ENCODE measurements at regions of chr12 and their contacts with region 1.

Region 1: DNA sequence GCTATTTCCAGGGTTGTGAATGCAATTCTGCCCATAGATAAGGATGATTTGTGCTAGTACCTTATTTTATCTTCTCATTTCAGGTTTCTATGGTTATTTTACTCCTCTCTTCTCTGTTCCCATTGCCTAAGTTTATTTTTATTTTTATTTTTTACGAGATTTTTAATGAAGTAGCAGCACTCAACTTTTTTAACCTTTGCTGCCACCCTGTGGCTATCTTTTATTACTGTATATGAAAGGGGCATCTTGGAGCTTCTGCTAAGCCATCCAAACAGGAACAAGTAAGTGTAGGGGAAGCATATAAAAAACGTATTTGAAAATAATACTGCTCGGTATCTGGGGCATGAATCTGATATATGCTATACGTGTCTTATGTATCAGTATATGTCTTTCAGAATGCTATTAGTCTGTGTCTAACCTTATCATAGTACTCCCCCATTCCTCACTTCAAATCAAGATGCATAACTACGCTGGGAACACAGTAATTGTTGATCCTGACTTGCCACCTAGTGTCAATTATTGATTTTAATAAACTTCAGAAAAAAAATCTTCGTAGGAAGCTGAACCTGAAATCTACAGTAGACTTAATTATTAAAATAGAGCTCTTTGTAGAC is 60.3 kb downstream of the KLRG1 start:
- DNase-seq: no peak
- H3K4me3 Mint-ChIP-seq: no peak overlapping the region
- H3K27ac Mint-ChIP-seq: no peak overlapping the region
- H3K4me1 Mint-ChIP-seq: peaks cover 9% of the 10 kb centered on the region
- H3K27me3 Mint-ChIP-seq: peaks cover 24% of the 10 kb centered on the region

Region 2: DNA sequence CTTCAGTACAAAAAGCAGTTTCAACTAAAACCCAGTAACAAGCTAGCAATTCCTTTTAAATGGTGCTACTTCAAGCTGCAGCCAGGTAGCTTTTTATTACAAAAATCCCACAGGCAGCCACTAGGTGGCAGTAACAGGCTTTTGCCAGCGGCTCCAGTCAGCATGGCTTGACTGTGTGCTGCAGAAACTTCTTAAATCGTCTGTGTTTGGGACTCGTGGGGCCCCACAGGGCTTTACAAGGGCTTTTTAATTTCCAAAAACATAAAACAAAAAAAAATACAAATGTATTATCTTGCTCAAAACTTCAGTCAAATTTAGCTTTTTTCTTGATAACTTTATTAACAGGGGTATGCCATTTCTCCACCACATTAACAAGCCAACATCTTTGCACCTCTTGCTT is 505.3 kb before region 1 on chr12:
- intact Hi-C with region 1: loop called (anchors 5 kb)
- DNase-seq: peak; percentile 43
- H3K4me3 Mint-ChIP-seq: no peak overlapping the region
- H3K27ac Mint-ChIP-seq: no peak overlapping the region
- H3K4me1 Mint-ChIP-seq: no peaks in the 10 kb centered on the region
- H3K27me3 Mint-ChIP-seq: peaks cover 31% of the 10 kb centered on the region

Region 3: GRCh38 chr12:8681041-8681902 is 368.4 kb before region 1 on chr12:
- intact Hi-C with region 1: loop called (anchors 1 kb)
- DNase-seq: no peak
- H3K4me3 Mint-ChIP-seq: no peak overlapping the region
- H3K27ac Mint-ChIP-seq: no peak overlapping the region
- H3K4me1 Mint-ChIP-seq: no peaks in the 10 kb centered on the region
- H3K27me3 Mint-ChIP-seq: peaks cover 8% of the 10 kb centered on the region

Region 4: DNA sequence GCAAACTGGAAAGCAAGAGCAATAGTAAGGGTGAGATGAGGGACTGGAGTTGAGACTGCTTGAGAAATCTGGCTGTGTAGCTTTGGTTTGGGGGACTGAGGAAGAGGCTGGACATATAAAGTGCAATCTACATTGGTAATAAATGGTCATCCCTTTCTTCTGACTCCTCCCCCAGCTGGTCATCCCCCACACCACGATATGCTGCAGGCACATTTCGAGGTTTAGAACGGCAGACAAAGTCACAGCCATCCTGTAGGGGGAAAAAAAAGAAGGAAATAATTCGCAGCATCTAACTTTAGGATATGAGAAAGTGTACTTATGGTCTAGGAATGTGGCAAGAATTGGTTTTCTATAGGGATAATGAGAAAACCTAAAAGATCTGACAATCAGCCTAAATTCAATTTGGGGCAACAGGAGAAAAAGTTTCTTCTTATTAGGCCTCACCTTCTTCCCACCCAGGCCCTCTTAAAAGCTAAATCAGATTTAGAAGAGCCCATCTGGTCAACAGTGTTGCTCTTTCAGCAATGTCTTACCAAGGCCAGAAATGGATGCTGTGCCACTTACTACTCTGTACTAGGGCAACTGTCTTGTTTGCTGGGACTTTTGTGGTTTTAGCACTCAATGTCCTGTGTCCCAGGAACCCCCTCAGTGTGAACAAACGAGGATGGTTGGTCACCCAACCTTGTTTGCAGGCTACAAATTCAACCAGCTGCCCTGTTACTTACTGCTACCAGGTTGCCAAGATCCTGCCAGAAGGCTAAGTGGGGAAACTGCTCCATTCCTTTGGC is 107.7 kb before region 1 on chr12:
- intact Hi-C with region 1: no loop called
- DNase-seq: no peak
- H3K4me3 Mint-ChIP-seq: no peak overlapping the region
- H3K27ac Mint-ChIP-seq: no peak overlapping the region
- H3K4me1 Mint-ChIP-seq: peaks cover 9% of the 10 kb centered on the region
- H3K27me3 Mint-ChIP-seq: no peaks in the 10 kb centered on the region

Region 5: GRCh38 chr12:9198012-9198411 is 148.4 kb after region 1 on chr12:
- intact Hi-C with region 1: no loop called
- DNase-seq: no peak
- H3K4me3 Mint-ChIP-seq: no peak overlapping the region
- H3K27ac Mint-ChIP-seq: no peak overlapping the region
- H3K4me1 Mint-ChIP-seq: no peaks in the 10 kb centered on the region
- H3K27me3 Mint-ChIP-seq: peaks cover 7% of the 10 kb centered on the region

Measured in activated T-helper 2 cell treated with anti-CD3 and anti-CD28 coated beads, Interferon-gamma antibody, Interleukin-2, Interleukin-4, amounts not matched to agents 10 μg/mL and 5 μg/mL and 100 μg/mL, durations not matched to agents 14 hours and 24 hours and 36 hours (primary cell).